Activated CD4-positive, alpha-beta memory T cell treated with anti-CD3 and anti-CD28 coated beads for 36 hours (primary cell): ENCODE measurements at regions of chr3 and their contacts with region 1.

Region 1: GRCh38 chr3:60081381-60082095 is 1031.7 kb upstream of the CFAP20DC start:
- DNase-seq: no peak
- H3K4me3 Mint-ChIP-seq: peak overlapping the region; percentile 42
- H3K27ac Mint-ChIP-seq: peak overlapping the region; percentile 79
- H3K4me1 Mint-ChIP-seq: peaks cover 61% of the 10 kb centered on the region
- H3K27me3 Mint-ChIP-seq: no peaks in the 10 kb centered on the region

Region 2: GRCh38 chr3:59935025-59935424 is 146.5 kb before region 1 on chr3:
- CTCF ChIA-PET with region 1: no interaction called
- POLR2A ChIA-PET with region 1: no interaction called
- intact Hi-C with region 1: loop called (anchors 2 kb)
- DNase-seq: peak; percentile 29
- H3K4me3 Mint-ChIP-seq: peak overlapping the region; percentile 8
- H3K27ac Mint-ChIP-seq: peak overlapping the region; percentile 74
- H3K4me1 Mint-ChIP-seq: peaks cover 53% of the 10 kb centered on the region
- H3K27me3 Mint-ChIP-seq: no peaks in the 10 kb centered on the region

Region 3: GRCh38 chr3:59992578-59992977 is 89.0 kb before region 1 on chr3:
- CTCF ChIA-PET with region 1: no interaction called
- POLR2A ChIA-PET with region 1: no interaction called
- intact Hi-C with region 1: loop called (anchors 5 kb)
- DNase-seq: peak; percentile 37
- H3K4me3 Mint-ChIP-seq: no peak overlapping the region
- H3K27ac Mint-ChIP-seq: no peak overlapping the region
- H3K4me1 Mint-ChIP-seq: peaks cover 57% of the 10 kb centered on the region
- H3K27me3 Mint-ChIP-seq: no peaks in the 10 kb centered on the region

Region 4: GRCh38 chr3:60010781-60011180 is 70.8 kb before region 1 on chr3:
- CTCF ChIA-PET with region 1: no interaction called
- POLR2A ChIA-PET with region 1: no interaction called
- intact Hi-C with region 1: loop called (anchors 2 kb)
- DNase-seq: peak; percentile 75
- H3K4me3 Mint-ChIP-seq: peak overlapping the region; percentile 60
- H3K27ac Mint-ChIP-seq: peak overlapping the region; percentile 85
- H3K4me1 Mint-ChIP-seq: peaks cover 77% of the 10 kb centered on the region
- H3K27me3 Mint-ChIP-seq: no peaks in the 10 kb centered on the region

Region 5: DNA sequence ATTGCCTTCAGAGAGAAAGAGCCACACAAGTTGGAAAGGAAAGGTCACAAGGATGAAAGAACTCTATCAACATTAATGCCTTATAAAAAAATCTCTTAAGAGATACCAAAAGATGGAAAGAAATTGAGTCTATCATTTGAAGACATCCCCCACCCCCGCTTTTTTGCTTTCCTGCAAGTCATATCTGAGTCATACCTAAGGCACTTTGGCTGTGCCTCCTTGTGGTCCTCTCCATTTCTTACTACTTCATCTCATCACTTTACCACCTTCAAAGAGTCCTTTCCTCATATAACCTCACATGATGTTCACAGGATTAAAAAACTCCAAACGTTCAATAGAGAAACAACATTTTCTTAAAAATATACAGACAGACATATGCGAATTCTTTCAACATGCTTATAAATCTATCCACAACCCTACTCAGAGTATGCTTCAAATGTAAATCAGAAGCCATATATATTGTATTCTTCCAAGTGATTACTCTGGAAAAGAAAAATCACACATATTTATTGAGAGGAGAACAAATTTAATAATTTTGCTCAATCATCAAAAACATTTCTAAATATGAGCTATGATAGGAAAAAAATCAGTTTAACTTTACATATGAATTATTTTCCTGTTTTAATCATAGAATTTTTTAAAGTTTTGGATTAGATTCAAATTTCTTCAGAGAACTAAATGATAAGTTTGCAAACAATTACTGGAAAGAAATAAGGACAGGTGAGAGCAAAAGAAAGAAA is 27.8 kb before region 1 on chr3:
- CTCF ChIA-PET with region 1: interaction called, 3 read pairs
- POLR2A ChIA-PET with region 1: no interaction called
- intact Hi-C with region 1: loop called (anchors 1 kb)
- DNase-seq: peak; percentile 67
- H3K4me3 Mint-ChIP-seq: no peak overlapping the region
- H3K27ac Mint-ChIP-seq: peak overlapping the region; percentile 83
- H3K4me1 Mint-ChIP-seq: peaks cover 79% of the 10 kb centered on the region
- H3K27me3 Mint-ChIP-seq: no peaks in the 10 kb centered on the region

Region 6: GRCh38 chr3:60192297-60193114 is 111.0 kb after region 1 on chr3:
- CTCF ChIA-PET with region 1: no interaction called
- POLR2A ChIA-PET with region 1: no interaction called
- intact Hi-C with region 1: loop called (anchors 2 kb)
- DNase-seq: peak; percentile 48
- H3K4me3 Mint-ChIP-seq: no peak overlapping the region
- H3K27ac Mint-ChIP-seq: peak overlapping the region; percentile 64
- H3K4me1 Mint-ChIP-seq: peaks cover 29% of the 10 kb centered on the region
- H3K27me3 Mint-ChIP-seq: peaks cover 3% of the 10 kb centered on the region